Gastrocnemius medialis (tissue), 4 donors: ENCODE measurements at regions of chr4 and their contacts with region 1.

Region 1: DNA sequence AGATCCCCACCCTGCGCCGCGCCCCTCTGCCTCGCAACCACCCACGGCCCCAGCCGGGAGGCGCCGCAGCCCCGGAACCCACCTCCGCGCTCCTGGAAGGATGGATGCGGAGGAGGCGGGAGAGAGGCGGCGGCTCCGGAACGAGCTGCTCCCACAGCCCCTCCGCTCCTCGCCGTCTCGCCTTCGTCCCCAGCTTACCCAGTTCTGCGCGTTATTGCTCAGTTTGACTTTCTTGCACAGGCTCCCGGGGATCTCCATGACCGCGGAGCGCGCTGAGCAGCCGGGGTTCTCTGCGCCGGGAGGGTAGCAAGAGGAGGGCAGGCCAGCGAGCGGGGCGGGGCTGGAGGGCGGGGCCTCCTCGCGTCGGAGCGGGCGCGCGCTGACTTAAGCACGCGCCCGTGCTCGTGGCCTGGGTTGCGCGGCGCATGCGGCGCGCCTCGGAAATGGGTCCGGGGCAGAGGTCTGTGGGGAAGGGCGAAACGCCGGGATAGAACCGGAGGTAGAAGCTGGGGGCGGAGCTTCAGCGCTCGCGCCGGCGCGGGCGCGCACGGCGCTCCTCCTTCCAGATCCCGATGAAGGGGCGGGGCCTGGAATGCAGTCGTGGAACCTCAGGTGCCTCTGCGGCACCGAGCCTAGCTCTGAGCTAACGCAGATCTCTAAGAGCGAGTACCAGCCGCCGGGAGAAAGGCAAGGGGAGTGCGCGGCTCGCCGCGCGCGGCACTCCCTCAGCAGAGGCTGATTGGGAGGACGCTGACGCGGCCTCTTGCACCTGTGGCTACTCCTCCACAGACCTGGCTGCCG is at the start of gene PAPSS1:
- DNase-seq: peak; percentile 95 to 97
- ATAC-seq: peak; percentile 98 to 99
- H3K4me3 ChIP-seq: peak within 1 kb of the TSS; percentile 90 to 99 (median 95)
- H3K27ac ChIP-seq: peak within 1 kb of the TSS; percentile 85 to 94 (median 94)
- H3K4me1 ChIP-seq: peaks cover 4 to 16% of the 10 kb centered on the region in 2 donors
- H3K27me3 ChIP-seq: no peaks in the 10 kb centered on the region
- CTCF ChIP-seq: no peak
- POLR2A ChIP-seq: peak; percentile 63 to 79
- total RNA-seq, gene PAPSS1: 3.7 to 7.0 (median 5.9) TPM

Region 2: GRCh38 chr4:107709916-107710315 is 10.2 kb before region 1 on chr4:
- in situ Hi-C with region 1: no loop called
- intact Hi-C with region 1: no loop called
- DNase-seq: no peak
- ATAC-seq: no peak
- H3K4me3 ChIP-seq: no peak overlapping the region
- H3K27ac ChIP-seq: no peak overlapping the region
- H3K4me1 ChIP-seq: no peaks in the 10 kb centered on the region
- H3K27me3 ChIP-seq: no peaks in the 10 kb centered on the region
- CTCF ChIP-seq: no peak
- POLR2A ChIP-seq: no peak

Region 3: GRCh38 chr4:107740381-107740780 is 20.3 kb after region 1 on chr4:
- in situ Hi-C with region 1: no loop called
- intact Hi-C with region 1: loop called (anchors 2 kb)
- DNase-seq: no peak
- ATAC-seq: peak in 1 of 2 donors; percentile 32
- H3K4me3 ChIP-seq: no peak overlapping the region
- H3K27ac ChIP-seq: peak overlapping the region; percentile 43 to 77 (median 61)
- H3K4me1 ChIP-seq: peaks cover 10 to 30% of the 10 kb centered on the region in 2 donors
- H3K27me3 ChIP-seq: no peaks in the 10 kb centered on the region
- CTCF ChIP-seq: no peak
- POLR2A ChIP-seq: no peak

Region 4: DNA sequence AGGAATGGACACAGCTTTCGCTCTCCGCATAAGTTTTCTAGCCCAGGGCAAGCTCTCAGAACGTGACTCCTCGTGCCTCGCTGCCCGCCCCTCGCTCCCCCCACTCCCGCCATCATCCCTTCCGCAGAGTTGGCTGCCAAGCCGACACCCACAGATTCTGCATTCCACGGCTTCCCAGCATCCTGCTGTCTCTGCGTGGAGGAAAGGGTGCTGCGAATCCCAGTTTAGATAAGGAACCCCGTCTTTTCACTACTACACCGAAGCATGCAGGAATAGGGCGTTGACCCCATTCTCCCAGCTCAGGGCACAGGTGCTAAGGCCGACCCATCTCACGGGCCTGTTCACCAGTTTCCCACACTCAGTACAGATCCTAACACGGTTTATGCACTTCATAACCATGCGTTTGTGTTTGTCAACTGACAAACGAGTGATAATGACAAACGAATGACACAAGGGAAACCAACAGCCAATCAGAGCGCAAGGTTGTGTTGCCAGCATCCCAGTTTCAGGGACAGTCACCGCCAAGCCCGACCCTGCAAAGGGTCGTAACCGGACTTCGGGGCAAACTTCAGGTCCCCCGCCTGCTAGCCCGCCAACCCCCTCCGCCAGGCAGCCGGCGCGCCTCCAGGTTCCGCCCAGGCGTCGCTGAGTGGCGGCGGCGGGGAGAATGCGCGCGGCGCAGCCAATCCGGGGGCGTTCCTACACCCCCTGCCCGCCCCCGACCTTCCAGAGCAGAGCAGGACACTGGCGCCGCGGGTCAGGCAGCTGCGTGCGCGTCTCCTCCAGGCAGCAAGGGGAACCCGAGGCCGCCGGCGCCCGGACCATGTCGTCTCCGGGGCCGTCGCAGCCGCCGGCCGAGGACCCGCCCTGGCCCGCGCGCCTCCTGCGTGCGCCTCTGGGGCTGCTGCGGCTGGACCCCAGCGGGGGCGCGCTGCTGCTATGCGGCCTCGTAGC is 211.0 kb after region 1 on chr4 and contains the start of gene CYP2U1:
- in situ Hi-C with region 1: no loop called
- intact Hi-C with region 1: loop called (anchors 1 kb)
- DNase-seq: peak; percentile 82 to 88
- ATAC-seq: peak; percentile 90 to 92
- H3K4me3 ChIP-seq: peak within 1 kb of the TSS; percentile 62 to 88 (median 78)
- H3K27ac ChIP-seq: peak within 1 kb of the TSS; percentile 78 to 90 (median 84)
- H3K4me1 ChIP-seq: peaks cover 26 to 27% of the 10 kb centered on the region in 2 donors
- H3K27me3 ChIP-seq: no peaks in the 10 kb centered on the region
- CTCF ChIP-seq: peak; percentile 31 to 56 (median 43)
- POLR2A ChIP-seq: peak; percentile 67 to 72
- total RNA-seq, gene CYP2U1: 3.5 to 7.5 (median 4.0) TPM

Region 5: DNA sequence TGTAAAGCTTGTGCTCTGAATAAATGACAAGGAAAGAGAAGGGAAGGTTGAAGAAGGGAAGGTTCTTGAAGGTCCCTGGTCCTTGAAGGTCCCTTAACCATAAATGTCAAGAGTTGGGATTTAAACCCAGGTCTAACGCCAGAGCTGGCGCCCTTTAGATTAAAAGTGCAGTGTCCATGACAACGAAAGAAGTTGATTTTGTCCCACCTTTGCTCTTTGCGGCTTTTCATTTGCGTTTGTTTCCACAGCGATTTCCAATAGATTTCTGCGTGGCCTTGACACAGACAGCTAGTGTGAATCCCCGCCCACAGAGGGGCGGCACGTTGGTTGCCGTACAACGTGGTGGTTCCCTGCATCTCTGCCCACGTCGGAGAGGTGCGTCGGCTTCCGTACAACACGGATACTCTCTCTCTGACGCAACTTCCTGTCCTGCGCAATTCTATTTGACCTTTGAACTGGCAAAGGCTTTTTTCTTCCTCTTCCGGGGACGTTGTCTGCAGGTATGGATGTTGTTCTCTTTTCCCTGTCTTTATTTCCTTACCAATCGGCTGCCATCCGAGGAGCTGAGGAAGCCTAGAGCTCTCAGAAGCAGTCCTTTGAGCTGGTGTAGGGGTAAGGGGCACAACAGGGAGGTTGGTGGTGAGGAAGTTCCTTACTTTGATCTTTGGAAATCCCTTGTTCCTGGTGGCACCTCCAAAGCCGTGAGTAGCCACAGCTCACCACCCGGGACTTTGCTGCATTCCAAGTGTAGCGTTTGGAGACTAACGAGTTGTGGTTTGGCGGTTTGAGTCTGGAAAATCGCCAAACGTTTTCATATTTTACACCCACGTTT is 900.2 kb after region 1 on chr4 and contains the start of gene RPL34:
- in situ Hi-C with region 1: loop called in 2 of 4 experiments (anchors 25 kb)
- intact Hi-C with region 1: loop called (anchors 5 kb)
- DNase-seq: peak; percentile 95 to 97
- ATAC-seq: peak; percentile 99
- H3K4me3 ChIP-seq: peak within 1 kb of the TSS; percentile 75 to 87 (median 79)
- H3K27ac ChIP-seq: peak within 1 kb of the TSS; percentile 78 to 87 (median 83)
- H3K4me1 ChIP-seq: peaks cover 19 to 21% of the 10 kb centered on the region in 2 donors
- H3K27me3 ChIP-seq: no peaks in the 10 kb centered on the region
- CTCF ChIP-seq: no peak
- POLR2A ChIP-seq: peak; percentile 93 to 94
- total RNA-seq, gene RPL34: 419 to 608 (median 540) TPM